Pancreas (tissue), 10 donors: ENCODE measurements at regions of chr9 and their contacts with region 1.

Region 1: GRCh38 chr9:134419684-134420076 is 93.4 kb downstream of the RXRA start:
- DNase-seq: no peak
- ATAC-seq: peak in 3 of 4 donors; percentile 9 to 35 (median 18)
- H3K4me3 ChIP-seq: no peak overlapping the region
- H3K27ac ChIP-seq: no peak overlapping the region
- H3K4me1 ChIP-seq: no peaks in the 10 kb centered on the region
- H3K27me3 ChIP-seq: no peaks in the 10 kb centered on the region
- CTCF ChIP-seq: peak in 1 of 4 donors; percentile 17

Region 2: DNA sequence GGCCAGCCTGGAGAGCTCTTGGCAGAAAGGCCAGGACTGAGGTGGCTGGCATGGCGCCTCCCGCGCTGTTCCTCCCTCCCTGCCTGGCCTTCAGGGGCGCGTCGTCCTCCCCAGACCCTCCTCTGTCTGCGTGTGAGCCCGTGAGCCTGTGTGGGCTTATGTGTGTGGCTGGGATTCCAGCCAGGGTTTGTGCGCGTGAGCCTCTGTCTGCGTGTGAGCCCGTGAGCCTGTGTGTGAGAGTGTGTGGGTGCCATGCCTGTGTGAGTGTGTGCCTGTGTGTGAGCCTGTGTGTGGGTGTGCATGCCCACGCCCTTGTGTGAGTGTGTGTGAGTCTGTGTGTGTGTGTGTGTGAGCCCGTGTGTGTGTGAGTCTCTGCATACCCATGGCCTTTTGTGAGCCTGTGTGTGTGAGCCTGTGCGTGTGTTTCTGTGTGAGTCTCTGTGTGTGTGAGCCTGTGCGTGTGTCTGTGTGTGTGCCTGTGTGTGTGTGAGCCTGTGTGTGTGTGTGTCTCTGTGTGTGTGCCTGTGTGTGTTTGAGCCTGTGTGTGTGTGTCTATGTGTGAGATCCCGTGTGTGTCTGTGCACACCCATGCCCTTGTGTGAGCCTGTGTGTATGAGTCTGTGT is 80.4 kb before region 1 on chr9:
- intact Hi-C with region 1: loop called in 1 of 3 experiments (anchors 10 kb)
- DNase-seq: peak in 1 of 6 donors; percentile 50
- ATAC-seq: peak; percentile 13 to 36 (median 18)
- H3K4me3 ChIP-seq: no peak overlapping the region
- H3K27ac ChIP-seq: peak overlapping the region; percentile 71 to 82 (median 78)
- H3K4me1 ChIP-seq: peaks cover 43 to 59% (median 51%) of the 10 kb centered on the region in 3 donors
- H3K27me3 ChIP-seq: no peaks in the 10 kb centered on the region
- CTCF ChIP-seq: no peak

Region 3: GRCh38 chr9:134475011-134475790 is 55.5 kb after region 1 on chr9:
- intact Hi-C with region 1: no loop called
- DNase-seq: peak in 1 of 6 donors; percentile 38
- ATAC-seq: peak in 3 of 4 donors; percentile 57 to 61 (median 59)
- H3K4me3 ChIP-seq: no peak overlapping the region
- H3K27ac ChIP-seq: no peak overlapping the region
- H3K4me1 ChIP-seq: no peaks in the 10 kb centered on the region
- H3K27me3 ChIP-seq: no peaks in the 10 kb centered on the region
- CTCF ChIP-seq: no peak

Region 4: GRCh38 chr9:134518004-134518606 is 98.4 kb after region 1 on chr9:
- intact Hi-C with region 1: no loop called
- DNase-seq: peak in 2 of 6 donors; percentile 55
- ATAC-seq: no peak
- H3K4me3 ChIP-seq: no peak overlapping the region
- H3K27ac ChIP-seq: no peak overlapping the region
- H3K4me1 ChIP-seq: no peaks in the 10 kb centered on the region
- H3K27me3 ChIP-seq: no peaks in the 10 kb centered on the region
- CTCF ChIP-seq: no peak